Dendritic cell treated with granulocyte-macrophage colony-stimulating factor and Interleukin-4, amounts not matched to agents 40 ng/mL and 50 ng/mL, for 4 days (primary cell): ENCODE measurements at regions of chr20 and their contacts with region 1.

Region 1: GRCh38 chr20:44747166-44748004 is 1.7 kb downstream of the KCNK15 start:
- H3K4me3 Mint-ChIP-seq: no peak overlapping the region
- H3K27ac Mint-ChIP-seq: no peak overlapping the region
- H3K4me1 Mint-ChIP-seq: no peaks in the 10 kb centered on the region
- H3K27me3 Mint-ChIP-seq: peaks cover 79% of the 10 kb centered on the region

Region 2: DNA sequence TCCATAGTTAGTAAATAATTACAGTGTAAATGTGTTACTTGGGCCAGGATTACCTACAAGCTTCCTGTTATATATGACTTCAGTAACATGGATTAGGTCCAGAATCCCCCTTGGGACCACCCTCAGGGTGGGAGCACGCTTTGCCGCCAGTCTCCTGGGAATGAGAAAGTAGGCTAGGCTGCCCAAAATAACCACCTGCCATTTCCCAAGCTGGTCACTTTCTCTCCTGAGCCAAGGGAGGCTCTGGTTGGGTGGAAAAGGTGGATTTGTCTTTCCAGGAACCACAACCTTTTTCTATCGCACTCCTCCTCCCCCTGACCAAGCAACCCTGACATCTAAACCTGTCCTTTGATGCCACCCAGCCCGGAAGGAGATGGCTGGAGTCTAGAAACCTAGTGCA is 72.6 kb after region 1 on chr20:
- intact Hi-C with region 1: no loop called
- H3K4me3 Mint-ChIP-seq: no peak overlapping the region
- H3K27ac Mint-ChIP-seq: no peak overlapping the region
- H3K4me1 Mint-ChIP-seq: no peaks in the 10 kb centered on the region
- H3K27me3 Mint-ChIP-seq: peaks cover 6% of the 10 kb centered on the region

Region 3: DNA sequence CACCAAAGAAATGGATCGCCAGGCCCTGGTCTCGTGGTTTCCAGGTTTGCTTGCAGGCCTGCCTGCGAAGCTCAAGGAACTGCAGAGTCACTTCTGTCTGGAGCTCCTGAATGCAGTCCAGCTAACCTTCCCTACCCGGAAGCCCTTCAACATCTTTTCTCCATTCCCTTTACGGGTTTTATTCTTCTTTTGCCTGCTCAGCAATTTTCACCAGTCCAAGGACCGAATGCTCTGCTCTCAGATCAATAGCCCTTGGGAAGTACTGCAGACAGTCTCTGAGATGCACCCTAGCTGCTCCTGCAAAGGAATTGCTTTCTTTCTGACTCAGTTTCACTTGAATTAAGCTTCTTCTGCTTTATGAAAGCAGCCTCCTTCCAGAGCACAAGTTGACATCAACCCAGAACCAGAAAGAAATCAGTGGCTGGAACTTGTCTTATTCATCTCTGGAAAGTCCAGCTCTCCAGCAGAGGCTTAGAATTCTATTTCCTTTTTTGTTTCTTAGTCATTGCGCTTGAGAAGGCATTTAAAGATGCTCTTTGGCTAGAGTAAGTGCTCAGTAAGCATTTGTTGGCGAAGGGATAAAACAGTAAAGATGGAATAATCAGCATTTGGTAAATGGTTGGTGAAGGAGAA is 119.4 kb after region 1 on chr20:
- intact Hi-C with region 1: loop called (anchors 1 kb)
- H3K4me3 Mint-ChIP-seq: peak overlapping the region; percentile 61
- H3K27ac Mint-ChIP-seq: peak overlapping the region; percentile 26
- H3K4me1 Mint-ChIP-seq: peaks cover 21% of the 10 kb centered on the region
- H3K27me3 Mint-ChIP-seq: peaks cover 10% of the 10 kb centered on the region